Right cardiac atrium (tissue), 5 donors: ENCODE measurements at regions of chr14 and their contacts with region 1.

Region 1: GRCh38 chr14:23729720-23730387 is 93.7 kb downstream of the DHRS2 start:
- DNase-seq: no peak
- ATAC-seq: no peak
- H3K4me3 ChIP-seq: no peak overlapping the region
- H3K27ac ChIP-seq: no peak overlapping the region
- H3K4me1 ChIP-seq: no peaks in the 10 kb centered on the region
- H3K27me3 ChIP-seq: no peaks in the 10 kb centered on the region

Region 2: DNA sequence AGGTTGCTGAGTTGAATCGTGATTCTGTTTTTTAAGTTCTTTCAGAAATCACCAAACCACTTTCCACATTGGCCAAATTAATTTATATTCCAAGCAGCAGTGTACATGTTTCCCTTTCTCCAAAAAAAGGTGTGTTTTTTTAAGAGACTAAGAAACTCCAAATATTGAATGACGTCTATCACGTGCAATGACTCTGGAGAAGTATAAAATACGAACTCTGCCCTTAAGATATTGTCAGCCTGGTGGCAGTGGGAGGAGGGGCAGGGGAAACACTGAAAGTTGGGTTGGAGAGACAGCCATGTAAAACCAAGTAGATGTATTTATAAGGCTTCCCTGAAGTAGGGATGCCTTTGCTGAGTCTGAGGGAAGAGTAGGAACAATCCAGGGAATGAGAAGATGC is 173.6 kb after region 1 on chr14:
- intact Hi-C with region 1: loop called in 1 of 4 experiments (anchors 10 kb)
- DNase-seq: no peak
- ATAC-seq: no peak
- H3K4me3 ChIP-seq: no peak overlapping the region
- H3K27ac ChIP-seq: no peak overlapping the region
- H3K4me1 ChIP-seq: no peaks in the 10 kb centered on the region
- H3K27me3 ChIP-seq: no peaks in the 10 kb centered on the region